HEK293T (cell line): ENCODE measurements at regions of chr1 and their contacts with region 1.

Region 1: DNA sequence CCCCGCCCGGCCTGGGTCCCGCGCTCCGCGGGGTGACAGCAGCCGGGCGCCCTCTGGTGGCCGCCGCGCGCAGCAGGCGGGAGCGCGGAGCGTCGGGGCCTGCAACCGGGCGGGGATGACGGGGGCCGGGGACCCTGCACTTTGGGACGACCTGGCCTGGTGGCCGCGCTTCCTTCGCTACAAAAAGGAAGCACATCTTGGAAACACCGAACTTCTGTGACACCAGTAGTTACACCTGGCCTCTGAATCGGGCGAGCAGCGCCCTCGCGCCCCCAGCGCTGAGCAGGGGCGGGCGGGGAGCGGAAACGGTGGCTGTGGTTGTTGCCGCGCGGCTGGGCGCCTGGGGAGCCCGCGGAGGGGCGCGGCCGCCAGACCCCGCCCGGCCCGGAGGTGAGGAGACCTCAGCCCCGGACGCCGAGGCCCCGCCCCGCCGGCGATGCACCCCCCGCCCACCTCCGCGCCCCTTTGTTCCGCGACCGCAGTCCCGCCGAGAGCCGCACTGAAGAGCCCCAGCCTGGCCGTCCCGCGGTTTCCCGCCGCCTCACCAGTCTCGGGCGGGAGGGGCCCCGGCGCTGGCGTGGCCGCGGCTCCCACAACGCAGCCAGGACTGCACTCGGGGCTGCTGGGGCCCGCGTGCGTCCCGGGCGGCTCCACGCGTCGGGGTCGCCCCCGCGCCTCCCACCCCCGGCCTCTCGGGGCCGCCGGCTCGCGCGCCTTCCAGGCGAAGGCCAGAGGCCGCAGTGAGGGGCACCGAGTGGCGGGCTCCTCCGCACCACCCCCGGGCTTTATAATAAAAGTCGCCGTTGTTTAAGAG is 59.3 kb downstream of the H3-3A start:
- DNase-seq: peak; percentile 94

Region 2: GRCh38 chr1:225777583-225778336 is 344.0 kb before region 1 on chr1 and contains the start of gene SRP9:
- CTCF ChIA-PET with region 1: no interaction called
- POLR2A ChIA-PET with region 1: no interaction called
- DNase-seq: peak; percentile 99

Region 3: DNA sequence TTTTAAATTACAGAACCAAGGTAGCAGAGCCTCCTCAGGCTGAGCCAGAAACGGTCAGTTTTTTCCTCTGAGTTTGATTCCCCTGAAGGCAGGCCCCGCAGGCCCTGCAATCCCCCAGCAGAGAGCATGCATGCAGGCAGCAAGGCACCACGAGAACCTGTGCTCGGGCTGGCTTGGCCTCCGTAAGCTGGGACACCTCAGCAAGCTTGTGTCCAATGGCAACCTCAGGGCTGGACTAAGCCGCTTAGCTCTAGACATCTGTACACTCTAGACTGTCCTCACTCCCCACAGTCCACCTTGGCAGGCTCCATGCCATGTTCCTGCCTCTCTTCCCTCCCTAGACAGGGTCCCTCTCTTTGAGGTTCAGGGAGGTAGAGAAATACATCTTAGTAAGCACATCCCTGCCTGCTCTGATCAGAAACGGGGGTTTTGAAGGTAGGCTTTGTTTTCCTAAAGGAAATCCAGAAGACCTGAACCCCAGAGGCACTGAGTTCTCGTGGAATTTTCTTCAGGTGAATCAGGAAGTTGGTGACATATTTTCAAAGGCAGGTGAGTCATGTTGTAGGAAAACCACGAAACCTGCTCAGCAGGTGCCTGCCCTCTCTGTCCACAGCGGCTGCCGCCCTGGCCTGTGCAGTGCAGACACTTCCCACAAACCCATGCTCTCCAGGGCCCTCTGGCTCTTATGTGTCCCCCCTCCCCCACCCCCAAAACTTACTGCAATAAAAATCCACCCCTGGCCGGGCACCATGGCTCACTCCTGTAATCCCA is 246.6 kb before region 1 on chr1:
- CTCF ChIA-PET with region 1: no interaction called
- POLR2A ChIA-PET with region 1: no interaction called
- DNase-seq: no peak

Region 4: GRCh38 chr1:226109829-226110248 is 12.0 kb before region 1 on chr1:
- CTCF ChIA-PET with region 1: interaction called, 8 read pairs
- POLR2A ChIA-PET with region 1: interaction called, 14 read pairs
- DNase-seq: peak; percentile 98

Region 5: GRCh38 chr1:226195144-226195543 is 73.3 kb after region 1 on chr1:
- CTCF ChIA-PET with region 1: interaction called, 29 read pairs
- POLR2A ChIA-PET with region 1: interaction called, 6 read pairs
- DNase-seq: no peak

Region 6: DNA sequence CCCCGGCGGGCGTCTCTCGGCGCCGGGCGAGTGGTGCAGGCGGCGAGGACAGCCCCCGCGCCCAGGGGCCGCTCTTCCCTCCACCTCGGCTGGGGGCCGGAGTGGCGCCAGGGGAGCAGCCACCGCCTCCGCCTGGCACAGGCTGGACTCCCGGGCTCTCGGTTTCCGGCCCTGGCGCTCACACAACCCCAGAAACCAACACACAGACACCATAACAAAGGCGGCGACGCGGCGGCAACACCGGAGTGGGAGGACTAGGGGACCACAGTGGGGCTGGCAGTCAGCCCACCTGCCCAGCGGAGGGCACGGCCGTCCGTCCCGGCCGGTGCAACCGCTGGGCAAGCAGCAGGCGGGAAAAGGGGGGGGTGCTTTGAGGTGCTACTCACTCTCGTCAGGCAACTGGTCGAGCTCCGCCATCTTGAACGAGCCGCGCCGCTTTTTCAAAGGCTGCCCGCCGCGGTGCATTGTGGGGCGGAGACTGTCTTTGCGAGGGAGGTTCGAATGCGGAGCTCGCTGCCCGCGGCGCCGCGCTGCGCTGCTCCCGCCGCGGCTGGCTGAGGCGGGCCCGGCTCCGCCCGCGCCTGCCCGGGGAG is 187.0 kb after region 1 on chr1 and contains the start of gene LIN9:
- CTCF ChIA-PET with region 1: interaction called, 7 read pairs
- POLR2A ChIA-PET with region 1: interaction called, 32 read pairs
- DNase-seq: peak; percentile 95